GM12878 (cell line): ENCODE measurements at regions of chr9 and their contacts with region 1.

Region 1: GRCh38 chr9:36995927-36996705 is 38.0 kb downstream of the PAX5 start:
- DNase-seq: no peak
- ATAC-seq: peak; percentile 55
- H3K4me3 ChIP-seq: peak overlapping the region; percentile 47
- H3K27ac ChIP-seq: peak overlapping the region; percentile 93
- H3K4me1 ChIP-seq: peaks cover 88% of the 10 kb centered on the region
- H3K27me3 ChIP-seq: no peaks in the 10 kb centered on the region
- CTCF ChIP-seq: peak; percentile 71 to 86 (median 86)
- EP300 ChIP-seq: no peak
- POLR2A ChIP-seq: peak; percentile 29; the same call in 1 of the 2 replicates
- RAD21 ChIP-seq: peak; percentile 85

Region 2: GRCh38 chr9:36818965-36819870 is 176.9 kb before region 1 on chr9:
- CTCF ChIA-PET with region 1: no interaction called
- POLR2A ChIA-PET with region 1: no interaction called
- RAD21 ChIA-PET with region 1: no interaction called
- SMC1A ChIA-PET with region 1: no interaction called
- in situ Hi-C with region 1: no loop called
- intact Hi-C with region 1: no loop called
- DNase-seq: no peak
- ATAC-seq: no peak
- H3K4me3 ChIP-seq: no peak overlapping the region
- H3K27ac ChIP-seq: no peak overlapping the region
- H3K4me1 ChIP-seq: no peaks in the 10 kb centered on the region
- H3K27me3 ChIP-seq: peaks cover 3 to 4% of the 10 kb centered on the region in 2 experiments; a peak in 3 of 4 replicates
- CTCF ChIP-seq: no peak
- EP300 ChIP-seq: no peak
- POLR2A ChIP-seq: no peak
- RAD21 ChIP-seq: no peak

Region 3: DNA sequence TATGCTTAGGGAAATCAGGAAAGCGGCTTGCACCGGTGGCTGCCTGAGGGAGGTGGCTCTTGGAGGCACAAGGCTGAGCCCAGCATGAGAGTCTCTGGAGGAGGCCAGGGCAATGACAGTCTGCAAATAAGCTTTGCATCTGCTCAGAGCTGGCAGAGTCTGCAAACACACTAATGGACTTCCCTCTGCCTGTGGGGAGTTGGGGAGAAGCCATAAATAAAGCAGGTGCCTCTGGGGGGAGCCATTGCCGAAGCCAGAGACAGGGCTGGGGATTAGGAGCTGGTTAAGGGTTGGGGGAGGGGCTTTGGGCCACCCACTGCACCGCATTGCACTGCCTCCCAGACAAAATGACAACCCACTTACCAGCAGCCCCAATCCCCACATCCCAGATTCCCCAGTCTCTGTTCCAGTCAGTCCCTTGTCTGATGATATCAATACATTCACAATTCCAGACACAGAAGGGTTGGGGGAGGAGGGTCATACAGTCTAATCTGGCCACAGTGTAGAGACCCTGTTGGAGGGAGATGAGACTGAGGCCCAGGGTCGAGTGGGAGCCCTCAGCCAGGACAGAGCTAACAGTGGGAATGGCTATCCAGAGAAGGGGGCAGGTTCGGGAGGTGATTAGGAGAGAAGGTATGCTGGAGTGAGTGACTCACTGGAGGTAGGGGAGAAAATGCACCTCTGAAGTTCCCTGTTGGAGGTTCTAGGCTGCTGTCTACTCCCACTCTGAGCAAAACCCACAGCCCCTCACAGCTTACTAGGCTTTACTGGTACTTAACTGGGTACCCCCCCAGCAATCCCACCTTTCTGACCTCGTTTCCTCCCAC is 15.8 kb before region 1 on chr9:
- CTCF ChIA-PET with region 1: interaction called, 22 read pairs
- POLR2A ChIA-PET with region 1: interaction called, 8 read pairs
- RAD21 ChIA-PET with region 1: interaction called, 5 read pairs
- SMC1A ChIA-PET with region 1: interaction called, 10 read pairs
- in situ Hi-C with region 1: no loop called
- intact Hi-C with region 1: no loop called
- DNase-seq: no peak
- ATAC-seq: peak; percentile 65
- H3K4me3 ChIP-seq: no peak overlapping the region
- H3K27ac ChIP-seq: no peak overlapping the region
- H3K4me1 ChIP-seq: no peaks in the 10 kb centered on the region
- H3K27me3 ChIP-seq: no peaks in the 10 kb centered on the region
- CTCF ChIP-seq: peak in 2 of 3 experiments; percentile 36 to 45; a peak in 2 of 6 replicates
- EP300 ChIP-seq: no peak
- POLR2A ChIP-seq: no peak
- RAD21 ChIP-seq: peak; percentile 70

Region 4: DNA sequence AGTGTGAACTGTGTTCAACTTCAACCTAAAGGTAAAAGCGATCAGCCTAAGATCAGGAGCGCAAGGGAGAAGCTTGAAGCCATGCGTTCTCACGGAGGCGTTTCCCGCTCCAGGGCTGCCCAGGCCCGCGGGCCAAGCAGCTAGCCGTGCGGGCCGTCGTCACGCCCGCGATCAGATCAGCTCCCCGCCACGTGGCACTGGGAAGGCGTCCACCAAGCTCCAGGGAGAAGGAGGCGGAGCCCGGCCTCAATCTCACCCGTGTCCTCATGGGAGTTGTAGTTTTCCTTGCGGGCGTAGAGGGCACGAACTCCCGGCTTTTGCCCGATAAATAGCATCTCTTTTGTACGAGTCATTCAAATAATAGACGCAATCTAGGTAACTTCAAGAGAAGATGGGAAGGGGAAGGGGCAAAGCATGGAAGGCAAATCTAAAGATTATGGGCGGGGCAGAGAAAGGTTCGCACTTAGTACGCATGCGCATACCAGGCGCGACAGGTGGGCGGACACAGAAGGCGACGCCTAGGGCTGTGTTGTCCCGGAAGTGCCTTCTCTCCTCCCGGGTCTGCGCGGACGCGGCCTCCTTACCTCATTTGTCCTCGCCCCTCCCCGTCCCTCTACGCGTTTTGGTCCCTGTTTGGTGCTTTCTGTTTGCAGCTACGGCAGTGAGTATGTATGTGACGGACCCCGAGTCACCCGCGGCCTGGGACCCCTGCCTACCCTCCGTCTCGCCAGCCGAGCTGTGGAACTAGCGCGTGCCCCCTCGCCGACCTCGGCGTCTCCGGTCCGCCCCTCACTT is 83.5 kb after region 1 on chr9:
- CTCF ChIA-PET with region 1: interaction called, 6 read pairs
- POLR2A ChIA-PET with region 1: interaction called, 3 read pairs
- RAD21 ChIA-PET with region 1: interaction called, 10 read pairs
- SMC1A ChIA-PET with region 1: interaction called, 4 read pairs
- in situ Hi-C with region 1: no loop called
- intact Hi-C with region 1: no loop called
- DNase-seq: peak; percentile 93
- ATAC-seq: peak; percentile 93
- H3K4me3 ChIP-seq: peak overlapping the region; percentile 84
- H3K27ac ChIP-seq: peak overlapping the region; percentile 87
- H3K4me1 ChIP-seq: peaks cover 20% of the 10 kb centered on the region
- H3K27me3 ChIP-seq: no peaks in the 10 kb centered on the region
- CTCF ChIP-seq: no peak
- EP300 ChIP-seq: no peak
- POLR2A ChIP-seq: peak; percentile 89
- RAD21 ChIP-seq: no peak

Region 5: GRCh38 chr9:37197158-37198038 is 201.3 kb after region 1 on chr9:
- CTCF ChIA-PET with region 1: interaction called, 26 read pairs
- POLR2A ChIA-PET with region 1: interaction called, 18 read pairs
- RAD21 ChIA-PET with region 1: interaction called, 57 read pairs
- SMC1A ChIA-PET with region 1: interaction called, 15 read pairs
- in situ Hi-C with region 1: no loop called
- intact Hi-C with region 1: loop called (anchors 5 kb)
- DNase-seq: peak; percentile 79
- ATAC-seq: peak; percentile 70
- H3K4me3 ChIP-seq: no peak overlapping the region; the same call in 1 of the 2 replicates
- H3K27ac ChIP-seq: peak overlapping the region; percentile 61
- H3K4me1 ChIP-seq: peaks cover 47% of the 10 kb centered on the region
- H3K27me3 ChIP-seq: no peaks in the 10 kb centered on the region
- CTCF ChIP-seq: no peak
- EP300 ChIP-seq: peak; percentile 34 to 55; a peak in 1 of 4 replicates
- POLR2A ChIP-seq: no peak
- RAD21 ChIP-seq: 0 out of 2 replicates have a peak, but pooled peaks have one; percentile 14

Region 6: DNA sequence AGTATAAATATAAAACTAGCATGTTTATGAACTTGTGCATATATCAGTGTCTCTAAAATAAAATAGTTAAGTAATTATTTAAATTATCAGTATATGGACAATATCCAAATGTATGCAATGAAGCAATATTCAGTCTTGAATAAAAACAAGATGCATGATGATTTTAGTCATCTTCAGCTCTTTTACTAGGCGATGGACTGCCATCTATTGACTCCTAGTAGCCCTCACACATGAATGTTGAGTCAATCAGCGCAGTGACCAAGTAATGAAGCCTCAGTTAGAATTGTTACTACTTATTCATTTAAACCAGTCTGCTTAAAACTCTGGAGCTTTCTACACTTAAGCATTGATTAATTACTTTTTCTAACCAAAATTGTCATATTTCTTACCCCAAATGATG is 333.5 kb after region 1 on chr9:
- CTCF ChIA-PET with region 1: interaction called, 60 read pairs
- POLR2A ChIA-PET with region 1: interaction called, 3 read pairs
- RAD21 ChIA-PET with region 1: interaction called, 33 read pairs
- SMC1A ChIA-PET with region 1: interaction called, 25 read pairs
- in situ Hi-C with region 1: no loop called
- intact Hi-C with region 1: no loop called
- DNase-seq: no peak
- ATAC-seq: peak; percentile 65
- H3K4me3 ChIP-seq: no peak overlapping the region
- H3K27ac ChIP-seq: no peak overlapping the region
- H3K4me1 ChIP-seq: peaks cover 18% of the 10 kb centered on the region
- H3K27me3 ChIP-seq: no peaks in the 10 kb centered on the region
- CTCF ChIP-seq: peak; percentile 47 to 73 (median 47); a peak in 4 of 6 replicates
- EP300 ChIP-seq: no peak
- POLR2A ChIP-seq: no peak
- RAD21 ChIP-seq: peak; percentile 79